Mucosa of descending colon (tissue), 3 donors: ENCODE measurements at regions of chr11 and their contacts with region 1.

Region 1: DNA sequence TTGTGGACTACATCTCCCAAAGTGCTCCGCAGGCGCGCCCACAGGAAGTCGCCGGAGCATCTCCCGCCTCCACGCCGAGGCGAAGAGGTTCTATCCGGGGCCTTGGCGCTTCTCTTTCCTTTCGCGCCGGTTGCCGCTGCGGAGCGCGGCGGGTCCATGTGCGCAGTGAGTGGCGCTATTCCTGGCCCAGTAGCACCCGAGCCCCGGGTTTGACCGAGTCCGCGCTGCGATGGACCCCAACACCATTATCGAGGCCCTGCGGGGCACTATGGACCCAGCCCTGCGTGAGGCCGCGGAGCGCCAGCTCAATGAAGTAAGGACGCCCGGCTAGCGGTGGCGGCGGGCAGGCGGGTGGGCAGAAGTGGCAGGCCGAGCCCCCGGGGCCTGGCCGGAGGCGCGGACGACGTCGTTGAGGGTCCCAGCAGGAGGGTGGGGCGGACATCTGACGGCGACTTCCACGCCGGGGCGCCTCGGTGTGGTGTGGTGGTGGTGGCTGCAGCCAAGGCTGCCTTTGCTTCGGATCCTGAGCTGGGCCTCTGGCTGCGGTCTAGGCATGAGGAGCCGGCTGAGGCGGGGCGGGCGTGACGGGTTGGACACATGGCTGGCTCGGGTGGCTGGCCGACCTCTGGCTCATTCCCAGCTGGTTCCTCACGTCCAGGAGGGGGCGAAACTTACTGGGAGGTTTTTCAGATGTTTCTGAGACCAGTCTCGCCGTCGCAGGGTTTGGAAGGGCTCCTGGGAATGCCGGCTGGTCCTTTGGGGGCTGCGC is at the start of gene IPO7:
- DNase-seq: peak; percentile 92 to 94 (median 93)
- ATAC-seq: peak; percentile 97
- H3K4me3 ChIP-seq: peak within 1 kb of the TSS; percentile 63
- H3K4me1 ChIP-seq: peaks cover 14% of the 10 kb centered on the region
- CTCF ChIP-seq: peak; percentile 26
- total RNA-seq, gene IPO7: 68.8 to 141 (median 69.9) TPM

Region 2: GRCh38 chr11:9078113-9079086 is 306.3 kb before region 1 on chr11:
- intact Hi-C with region 1: no loop called
- DNase-seq: no peak
- ATAC-seq: peak; percentile 64
- H3K4me3 ChIP-seq: no peak overlapping the region
- H3K4me1 ChIP-seq: no peaks in the 10 kb centered on the region
- CTCF ChIP-seq: no peak

Region 3: GRCh38 chr11:9314291-9315036 is 70.3 kb before region 1 on chr11 and contains the start of gene TMEM41B:
- intact Hi-C with region 1: loop called in 1 of 2 experiments (anchors 10 kb)
- DNase-seq: peak; percentile 98 to 99 (median 99)
- ATAC-seq: peak; percentile 97
- H3K4me3 ChIP-seq: peak within 1 kb of the TSS; percentile 74
- H3K4me1 ChIP-seq: peaks cover 20% of the 10 kb centered on the region
- CTCF ChIP-seq: no peak
- total RNA-seq, gene TMEM41B: 33.2 to 57.9 (median 54.0) TPM